PC-9 (cell line): ENCODE measurements at regions of chr1 and their contacts with region 1.

Region 1: GRCh38 chr1:17606826-17607440 is 67.4 kb downstream of the ARHGEF10L start:
- DNase-seq: peak in 1 of 2 experiments; percentile 71
- H3K4me3 ChIP-seq: no peak overlapping the region
- H3K27ac ChIP-seq: no peak overlapping the region
- H3K4me1 ChIP-seq: no peaks in the 10 kb centered on the region
- H3K27me3 ChIP-seq: no peaks in the 10 kb centered on the region
- CTCF ChIP-seq: peak; percentile 85

Region 2: GRCh38 chr1:17053685-17054410 is 553.1 kb before region 1 on chr1 and contains the start of gene SDHB:
- CTCF ChIA-PET with region 1: no interaction called
- POLR2A ChIA-PET with region 1: no interaction called
- intact Hi-C with region 1: loop called (anchors 10 kb)
- DNase-seq: peak; percentile 84 to 98
- H3K4me3 ChIP-seq: peak within 1 kb of the TSS; percentile 71
- H3K27ac ChIP-seq: peak within 1 kb of the TSS; percentile 38; the same call in 1 of the 2 replicates
- H3K4me1 ChIP-seq: peaks cover 7% of the 10 kb centered on the region; the same call in 1 of the 2 replicates
- H3K27me3 ChIP-seq: no peaks in the 10 kb centered on the region
- CTCF ChIP-seq: no peak
- total RNA-seq, gene SDHB: 101 and 123 TPM in 2 replicates

Region 3: DNA sequence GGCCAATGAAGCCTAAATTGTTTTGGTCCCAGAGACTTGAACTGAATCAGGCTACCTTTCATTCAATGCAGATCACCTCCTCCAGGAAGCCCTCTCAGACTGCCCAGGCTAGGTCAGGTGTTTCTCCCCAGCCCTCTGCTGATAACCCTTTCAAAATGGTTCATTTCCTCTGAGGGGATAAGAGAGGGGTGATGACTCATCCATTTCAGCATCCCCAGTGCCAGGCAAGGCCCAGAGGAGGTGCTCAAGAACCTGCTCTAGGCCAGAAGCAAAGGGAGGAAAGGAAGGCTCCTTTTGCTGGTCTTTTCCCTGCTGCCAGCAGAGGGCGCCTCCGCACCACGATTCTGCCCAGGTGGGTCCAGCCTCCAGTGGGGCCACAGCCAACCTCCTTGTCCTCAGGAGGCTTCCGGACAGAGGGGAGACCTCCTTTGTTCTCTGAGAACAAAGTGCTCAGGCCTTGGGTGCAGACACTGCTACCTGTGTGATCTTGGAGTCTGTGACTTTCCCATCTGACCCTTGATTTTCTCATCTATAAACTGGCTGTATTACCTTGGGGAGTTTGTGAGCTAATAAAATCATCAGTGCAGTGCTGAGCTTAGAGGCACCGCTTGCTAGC is 112.7 kb before region 1 on chr1:
- CTCF ChIA-PET with region 1: interaction called, 6 read pairs
- POLR2A ChIA-PET with region 1: no interaction called
- intact Hi-C with region 1: loop called (anchors 2 kb)
- DNase-seq: peak; percentile 76 to 77
- H3K4me3 ChIP-seq: no peak overlapping the region
- H3K27ac ChIP-seq: no peak overlapping the region
- H3K4me1 ChIP-seq: peaks cover 7% of the 10 kb centered on the region; the same call in 1 of the 2 replicates
- H3K27me3 ChIP-seq: no peaks in the 10 kb centered on the region
- CTCF ChIP-seq: peak; percentile 89

Region 4: DNA sequence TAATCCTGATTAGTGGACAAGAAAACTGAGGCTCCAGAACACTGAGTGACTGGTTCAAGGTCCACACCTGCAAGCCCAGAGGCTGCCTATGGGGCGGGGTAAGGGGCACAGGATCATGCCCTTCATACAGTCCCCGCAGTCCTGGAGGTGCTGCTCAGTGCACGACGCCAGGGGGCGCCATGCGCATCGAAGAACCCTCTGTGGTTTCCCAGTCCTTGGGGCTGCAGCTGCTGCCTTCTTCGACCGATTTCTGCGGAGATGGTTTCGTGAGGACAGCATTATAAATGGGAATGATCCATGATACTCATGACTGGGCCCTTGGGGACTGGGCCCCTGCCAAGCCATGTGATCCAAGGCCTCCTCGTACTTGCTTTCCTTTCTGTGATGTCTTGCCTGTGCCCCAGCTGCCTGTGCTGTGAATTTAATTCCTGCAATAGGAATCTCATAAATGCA is 104.6 kb before region 1 on chr1:
- CTCF ChIA-PET with region 1: interaction called, 33 read pairs
- POLR2A ChIA-PET with region 1: no interaction called
- intact Hi-C with region 1: loop called (anchors 1 kb)
- DNase-seq: peak; percentile 54 to 79
- H3K4me3 ChIP-seq: no peak overlapping the region
- H3K27ac ChIP-seq: no peak overlapping the region
- H3K4me1 ChIP-seq: 0 out of 2 replicates have a peak, but pooled peaks cover 7% of the 10 kb centered on the region
- H3K27me3 ChIP-seq: no peaks in the 10 kb centered on the region
- CTCF ChIP-seq: peak; percentile 81

Region 5: DNA sequence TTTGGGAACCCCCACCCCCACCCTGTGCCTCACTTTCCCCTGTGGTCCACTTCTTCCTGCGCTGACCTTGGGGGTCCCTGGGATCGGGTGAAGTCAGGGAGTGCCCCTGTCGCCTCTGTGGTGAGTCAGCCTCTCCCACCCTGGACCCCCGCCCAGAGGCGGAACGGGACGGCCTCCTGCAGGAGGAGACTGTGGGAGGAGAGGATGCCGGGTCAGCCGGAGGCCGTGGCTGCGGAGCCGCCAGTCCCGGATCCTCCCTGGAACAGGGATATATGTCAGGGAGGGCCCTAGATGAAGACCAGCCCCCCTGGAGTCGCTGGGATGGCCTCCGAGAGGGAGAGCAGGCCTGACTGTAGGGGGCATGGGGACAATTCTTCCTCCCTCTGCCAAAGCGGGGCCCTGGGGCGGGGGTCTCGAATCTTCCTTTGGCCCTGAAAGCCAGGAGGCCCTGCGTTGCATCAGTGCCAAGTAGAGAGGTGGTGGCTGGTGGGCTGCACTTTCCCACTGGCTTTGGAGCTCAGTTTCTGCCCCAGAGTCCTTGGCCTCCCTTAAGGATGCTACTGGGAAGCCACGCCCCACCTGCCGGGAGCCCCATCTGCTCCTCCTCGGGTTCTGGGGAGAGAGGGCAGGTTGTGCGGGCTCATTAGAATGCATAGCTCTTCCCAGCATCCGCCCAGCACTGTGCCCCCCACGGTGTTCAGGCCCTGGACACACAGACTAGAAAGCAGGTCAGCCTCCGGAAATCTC is 66.5 kb before region 1 on chr1:
- CTCF ChIA-PET with region 1: no interaction called
- POLR2A ChIA-PET with region 1: no interaction called
- intact Hi-C with region 1: no loop called
- DNase-seq: no peak
- H3K4me3 ChIP-seq: peak overlapping the region; percentile 75
- H3K27ac ChIP-seq: peak overlapping the region; percentile 61
- H3K4me1 ChIP-seq: peaks cover 20% of the 10 kb centered on the region
- H3K27me3 ChIP-seq: no peaks in the 10 kb centered on the region
- CTCF ChIP-seq: no peak

Region 6: DNA sequence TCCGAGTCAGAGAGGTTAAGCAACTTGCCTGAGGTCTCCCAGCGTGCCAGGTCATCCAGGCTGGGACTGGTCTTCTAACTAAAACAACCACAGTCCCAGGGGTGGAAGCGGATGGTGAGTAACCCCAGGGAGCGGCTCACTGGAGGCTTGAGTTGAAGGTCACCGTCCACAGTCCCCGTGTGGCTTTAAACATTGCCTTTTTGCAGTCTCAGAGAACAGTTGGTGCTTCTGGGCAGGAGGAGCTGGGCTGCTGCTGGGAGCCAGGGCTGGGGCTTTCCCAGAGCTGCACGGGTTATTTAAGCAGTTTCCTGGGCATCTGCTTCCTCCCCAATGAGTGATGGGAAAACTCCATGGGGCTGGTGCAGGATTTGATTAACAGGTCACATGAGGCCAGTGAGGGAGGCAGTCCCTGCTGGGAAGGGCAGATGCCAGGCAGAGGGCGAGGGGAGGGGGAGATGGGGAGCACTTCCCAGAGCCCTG is 55.1 kb before region 1 on chr1:
- CTCF ChIA-PET with region 1: interaction called, 6 read pairs
- POLR2A ChIA-PET with region 1: interaction called, 3 read pairs
- intact Hi-C with region 1: loop called (anchors 5 kb)
- DNase-seq: peak in 1 of 2 experiments; percentile 63
- H3K4me3 ChIP-seq: no peak overlapping the region; the same call in 1 of the 2 replicates
- H3K27ac ChIP-seq: peak overlapping the region; percentile 95
- H3K4me1 ChIP-seq: peaks cover 56% of the 10 kb centered on the region
- H3K27me3 ChIP-seq: no peaks in the 10 kb centered on the region
- CTCF ChIP-seq: no peak

Region 7: DNA sequence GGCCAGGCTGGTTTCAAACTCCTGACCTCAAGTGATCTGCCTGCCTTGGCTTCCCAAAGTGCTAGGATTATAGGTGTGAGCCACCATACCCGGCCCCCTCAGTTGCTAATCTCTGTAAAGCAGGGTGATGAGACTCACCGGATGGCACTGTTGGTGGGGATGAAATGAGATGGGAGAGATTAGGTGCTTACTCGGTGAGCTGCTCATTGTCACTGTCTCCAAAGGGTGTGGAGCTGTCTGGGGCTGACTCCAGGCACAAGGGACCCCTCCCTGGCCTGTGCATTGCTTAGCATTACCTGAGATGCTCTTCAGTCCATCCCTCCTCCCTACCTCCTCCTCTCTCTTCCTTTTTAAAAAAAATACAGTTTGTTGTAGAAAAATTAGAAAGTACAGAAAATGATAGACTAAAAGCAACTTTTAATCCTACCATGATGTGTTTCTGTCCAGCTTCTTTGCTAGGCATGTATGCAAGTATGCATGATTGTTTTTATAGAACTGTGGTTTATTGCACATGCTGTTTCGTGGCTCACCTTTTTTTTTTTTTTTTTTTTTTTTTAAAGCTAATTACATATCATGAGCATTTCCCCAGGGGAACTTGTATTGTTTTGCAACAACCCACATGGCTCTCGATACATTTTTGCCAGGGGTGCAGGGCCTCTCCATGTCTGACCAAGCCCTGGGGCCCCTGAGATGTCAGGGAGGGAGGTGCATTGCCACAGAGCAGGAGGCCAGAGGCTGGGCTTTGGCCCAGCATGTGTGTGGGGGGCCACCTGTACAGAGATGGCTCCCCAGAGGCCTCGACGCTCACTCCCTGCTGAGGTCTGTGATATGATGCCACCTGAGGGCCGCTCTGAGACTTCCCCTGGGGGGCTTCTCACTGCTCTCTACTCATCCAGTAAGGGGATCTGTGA is 12.0 kb before region 1 on chr1:
- CTCF ChIA-PET with region 1: no interaction called
- POLR2A ChIA-PET with region 1: interaction called, 11 read pairs
- intact Hi-C with region 1: no loop called
- DNase-seq: no peak
- H3K4me3 ChIP-seq: no peak overlapping the region
- H3K27ac ChIP-seq: no peak overlapping the region
- H3K4me1 ChIP-seq: no peaks in the 10 kb centered on the region
- H3K27me3 ChIP-seq: no peaks in the 10 kb centered on the region
- CTCF ChIP-seq: no peak